ENCODE measurements at regions of chr6 and their contacts with region 1.

Region 1: DNA sequence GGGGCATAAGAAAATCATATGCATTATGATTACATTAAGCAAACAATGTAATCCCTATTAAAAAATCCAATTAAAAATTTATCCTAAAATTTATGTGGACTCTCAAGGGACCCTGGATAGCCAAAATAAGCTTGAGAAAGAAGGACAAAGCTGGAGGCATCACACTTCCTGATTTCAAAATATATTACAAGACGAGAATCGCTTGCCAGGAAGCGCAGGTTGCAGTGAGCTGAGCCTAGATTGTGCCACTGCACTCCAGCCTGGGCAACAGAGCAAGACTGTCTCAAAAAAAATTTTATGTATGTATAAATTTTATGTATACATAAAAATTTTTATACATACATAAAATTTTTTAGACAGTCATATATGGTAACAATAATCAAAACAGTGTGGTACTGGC is 48.5 kb upstream of the GCNT2 start:
- DNase-seq: no peak
- CTCF ChIP-seq: no peak

Region 2: DNA sequence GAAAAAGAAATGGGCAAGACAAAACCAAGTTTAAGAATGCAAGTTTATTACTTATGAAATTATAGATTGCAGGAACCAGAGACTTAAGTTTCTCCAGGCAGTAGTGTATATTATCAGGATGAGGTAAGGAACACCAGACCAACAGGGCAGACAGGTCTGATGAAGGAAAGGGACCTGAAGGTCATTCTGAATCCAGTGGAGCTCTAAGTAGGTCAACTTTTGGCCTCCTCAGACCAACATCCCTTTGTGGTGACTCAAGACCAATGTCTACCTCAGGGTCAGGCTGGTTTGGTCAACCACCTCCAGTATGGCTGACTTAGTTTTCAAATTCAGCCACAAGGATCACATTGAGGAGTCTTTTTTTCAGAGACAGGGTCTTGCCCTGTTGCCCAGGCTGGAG is 19.1 kb before region 1 on chr6:
- CTCF ChIA-PET with region 1: no interaction called
- POLR2A ChIA-PET with region 1: no interaction called
- DNase-seq: no peak
- CTCF ChIP-seq: no peak

Region 3: GRCh38 chr6:10487668-10488327 is 15.2 kb after region 1 on chr6:
- CTCF ChIA-PET with region 1: no interaction called
- POLR2A ChIA-PET with region 1: no interaction called
- DNase-seq: no peak
- CTCF ChIP-seq: no peak

Region 4: DNA sequence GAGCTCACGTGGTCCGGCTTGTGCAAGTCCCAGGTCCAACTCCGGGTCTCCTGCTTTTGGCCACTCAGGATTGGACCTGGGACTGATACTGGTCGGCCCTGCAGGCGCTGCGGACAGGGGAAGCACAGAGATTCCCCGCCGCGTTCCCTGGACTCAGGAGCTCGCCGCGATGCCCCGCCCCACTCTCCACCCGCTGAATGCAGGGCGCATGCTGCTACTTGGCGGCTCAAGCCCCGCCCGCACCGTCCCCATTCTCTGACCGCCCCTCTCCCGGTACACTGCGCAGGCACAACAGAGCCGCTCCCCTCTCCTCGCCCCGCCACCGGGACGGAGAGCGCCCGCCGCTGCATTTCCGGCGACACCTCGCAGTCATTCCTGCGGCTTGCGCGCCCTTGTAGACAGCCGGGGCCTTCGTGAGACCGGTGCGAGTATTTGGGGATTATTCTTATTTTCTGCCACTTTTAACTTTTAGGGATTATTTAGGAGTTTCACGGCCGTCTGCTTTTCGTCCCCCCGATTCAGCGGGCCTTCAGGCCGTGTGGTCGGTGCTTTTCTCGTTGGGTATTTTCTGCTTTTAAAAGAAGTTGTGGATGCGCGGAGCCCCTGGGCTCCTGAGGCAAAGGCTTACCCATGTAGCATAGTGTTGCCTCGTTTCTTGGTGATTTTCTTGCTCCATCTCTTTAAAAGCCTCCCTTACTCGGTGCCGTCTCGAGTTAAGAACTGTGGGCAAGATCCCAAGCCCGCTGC is 250.4 kb after region 1 on chr6 and contains the start of gene TMEM14C:
- CTCF ChIA-PET with region 1: no interaction called
- POLR2A ChIA-PET with region 1: no interaction called
- DNase-seq: peak; percentile 97
- CTCF ChIP-seq: no peak

Region 5: DNA sequence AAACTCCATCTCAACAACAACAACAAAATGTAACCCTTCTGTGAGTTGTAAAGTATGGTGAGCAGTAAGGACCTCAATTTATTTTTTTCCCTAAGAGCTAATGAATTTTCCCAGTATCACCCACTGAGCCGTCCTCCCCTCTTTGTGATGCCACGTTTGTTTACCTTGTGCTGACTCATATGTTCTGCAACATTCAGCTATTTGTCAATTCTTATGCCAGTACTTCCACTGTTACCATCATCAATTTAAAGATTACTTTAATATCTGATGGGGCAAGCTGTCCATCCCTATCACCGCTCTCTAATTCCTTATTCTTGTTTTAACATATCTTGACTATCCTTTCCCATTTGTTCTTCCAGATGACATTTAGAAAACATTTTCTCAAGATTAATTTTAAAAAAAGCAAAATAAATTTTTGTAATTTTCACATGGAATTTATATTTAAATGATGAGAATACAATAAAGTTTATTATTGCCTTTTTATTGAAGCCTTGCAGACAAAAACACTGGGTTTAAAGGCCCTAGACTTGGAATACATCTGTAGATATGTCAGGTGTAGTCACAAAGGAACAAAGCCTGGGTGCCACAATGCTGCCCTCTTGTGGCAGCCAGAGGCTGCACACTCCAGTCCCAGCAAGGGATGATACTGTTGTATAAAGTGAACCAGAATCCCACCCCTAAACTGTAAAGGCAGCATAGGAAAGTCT is 328.3 kb after region 1 on chr6:
- CTCF ChIA-PET with region 1: interaction called, 75 read pairs
- POLR2A ChIA-PET with region 1: no interaction called
- DNase-seq: peak; percentile 81
- CTCF ChIP-seq: peak; percentile 92